PC-9 (cell line): ENCODE measurements at regions of chr19 and their contacts with region 1.

Region 1: DNA sequence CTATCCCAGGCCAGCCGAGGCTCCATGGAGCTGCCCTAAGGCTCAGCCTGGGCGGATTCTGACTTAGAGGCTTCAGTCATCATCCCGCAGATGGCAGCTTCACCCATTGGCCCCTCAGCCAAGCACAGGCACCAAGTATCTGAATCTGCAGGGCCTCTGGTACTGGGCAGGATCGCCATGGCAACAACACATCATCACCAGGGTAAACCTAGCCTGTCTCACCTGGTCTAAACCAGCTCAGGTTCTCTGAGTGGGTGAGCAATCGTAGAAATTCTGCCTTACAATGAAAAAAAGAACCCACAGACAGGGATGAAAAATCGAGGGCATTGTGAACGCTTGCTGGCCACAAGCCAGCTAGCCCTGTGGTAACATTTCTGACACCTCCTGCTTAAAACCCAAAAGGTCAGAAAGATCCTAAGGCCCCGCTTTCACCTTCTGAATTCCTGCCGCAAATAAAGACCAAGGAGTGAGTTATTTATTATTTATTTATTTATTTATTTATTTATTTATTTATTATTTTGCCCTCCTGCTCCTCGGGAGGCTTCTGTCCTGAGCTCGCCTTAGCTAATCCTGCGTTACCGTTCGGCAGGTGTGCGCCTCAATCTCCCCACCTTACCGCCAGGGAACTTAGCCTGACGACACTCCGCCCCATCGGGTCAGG is 12.0 kb upstream of the CEACAM21 start:
- DNase-seq: no peak
- H3K4me3 ChIP-seq: no peak overlapping the region
- H3K27ac ChIP-seq: no peak overlapping the region
- H3K4me1 ChIP-seq: no peaks in the 10 kb centered on the region
- H3K27me3 ChIP-seq: peaks cover 55% of the 10 kb centered on the region
- CTCF ChIP-seq: no peak

Region 2: DNA sequence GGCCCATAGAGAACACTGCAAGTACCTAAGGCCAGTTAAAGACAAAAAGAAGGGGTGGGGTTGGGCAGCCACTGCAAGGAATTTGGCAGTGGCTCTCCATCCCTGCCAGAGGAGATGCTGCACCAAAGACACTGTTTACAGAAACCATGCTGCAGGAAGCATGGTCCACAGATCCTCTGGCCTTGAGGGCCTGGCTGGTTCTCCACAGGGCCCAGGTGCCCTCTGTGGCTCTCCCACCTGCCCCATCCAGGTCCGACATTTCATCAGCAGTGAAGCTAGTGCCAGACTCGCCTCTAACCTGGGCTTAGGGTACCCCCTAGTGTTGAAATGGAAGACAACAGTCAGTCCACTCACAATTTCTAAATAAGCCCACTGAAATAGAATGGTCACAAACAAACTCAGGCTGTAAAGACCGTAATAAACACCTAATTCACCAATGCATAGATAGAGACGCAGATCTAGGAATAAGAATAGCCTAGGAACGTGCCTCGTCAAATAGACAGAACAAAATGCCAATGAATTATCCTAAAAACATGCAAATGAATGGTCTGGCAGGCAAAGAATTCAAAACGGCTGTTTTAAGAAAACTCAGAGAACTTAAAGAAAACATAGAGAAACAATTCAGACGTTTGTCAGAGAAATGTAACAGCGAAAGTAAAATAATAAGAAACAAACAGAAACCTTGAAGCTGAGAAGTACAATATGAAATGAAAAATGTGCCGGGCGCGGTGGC is 257.2 kb after region 1 on chr19:
- CTCF ChIA-PET with region 1: no interaction called
- POLR2A ChIA-PET with region 1: interaction called, 11 read pairs
- intact Hi-C with region 1: no loop called
- DNase-seq: peak; percentile 45 to 47
- H3K4me3 ChIP-seq: no peak overlapping the region
- H3K27ac ChIP-seq: no peak overlapping the region
- H3K4me1 ChIP-seq: no peaks in the 10 kb centered on the region
- H3K27me3 ChIP-seq: 0 out of 2 replicates have a peak, but pooled peaks cover 5% of the 10 kb centered on the region
- CTCF ChIP-seq: peak; percentile 87